ENCODE measurements at regions of chr13 and their contacts with region 1.

Region 1: DNA sequence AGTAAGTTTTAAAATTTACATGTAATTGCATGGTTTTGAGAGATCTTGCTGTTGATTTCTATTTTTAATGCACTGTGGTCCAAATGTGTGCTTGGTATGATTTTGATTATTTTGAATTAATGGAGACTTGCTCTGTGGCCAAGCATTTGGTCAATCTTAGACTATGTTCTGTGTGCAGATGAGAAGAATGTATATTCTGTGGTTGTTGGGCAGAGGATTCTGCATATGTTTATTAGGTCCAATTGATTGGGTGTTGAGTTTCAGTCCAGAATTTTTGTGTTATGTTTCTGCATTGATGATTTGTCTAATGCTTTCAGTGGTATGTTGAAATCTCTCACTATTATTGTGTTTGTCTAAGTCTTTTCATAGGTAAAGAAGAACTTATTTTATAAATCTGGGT is 82.3 kb downstream of the TDRD3 start:
- DNase-seq: no peak
- H3K4me3 ChIP-seq: no peak overlapping the region
- H3K27ac ChIP-seq: no peak overlapping the region
- H3K4me1 ChIP-seq: no peaks in the 10 kb centered on the region
- H3K27me3 ChIP-seq: no peaks in the 10 kb centered on the region
- CTCF ChIP-seq: no peak
- POLR2A ChIP-seq: no peak

Region 2: DNA sequence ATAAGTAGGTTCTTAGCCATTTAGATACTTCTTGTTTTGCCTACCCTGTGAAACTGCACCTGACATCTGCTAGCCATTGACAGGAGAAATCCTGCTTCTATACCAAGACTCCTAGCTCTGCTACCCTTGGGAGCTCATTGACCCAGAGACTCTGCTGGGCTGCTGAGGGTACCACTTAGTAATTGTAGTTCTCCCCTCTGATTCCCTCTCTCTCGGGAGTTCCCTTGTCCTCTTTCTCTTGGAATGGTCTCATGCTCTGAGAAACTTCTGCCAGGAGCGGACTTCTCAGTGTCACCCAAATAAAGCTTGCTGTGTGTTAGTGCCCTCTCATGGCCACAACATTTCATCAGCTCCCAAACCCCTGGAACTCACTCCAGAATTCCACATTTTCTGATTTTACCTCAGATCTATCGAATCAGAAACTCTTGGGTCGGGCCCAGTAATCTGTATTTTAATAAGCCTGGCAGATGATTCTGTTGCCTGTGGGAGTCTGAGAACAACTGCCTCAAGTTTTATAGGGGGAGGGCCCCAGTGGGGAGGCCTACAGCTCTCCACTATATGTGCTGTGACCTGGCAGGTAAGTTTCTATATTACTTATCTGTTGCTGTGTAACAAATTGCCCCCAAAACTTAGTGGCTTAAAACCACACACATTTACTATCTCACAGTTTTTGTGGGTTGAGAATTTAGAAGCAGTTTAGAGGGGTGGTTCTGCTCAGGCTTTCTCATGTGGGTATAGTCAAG is 138.9 kb after region 1 on chr13:
- intact Hi-C with region 1: loop called in 1 of 2 experiments (anchors 10 kb)
- DNase-seq: peak in 5 of 7 donors; percentile 21 to 25 (median 21)
- H3K4me3 ChIP-seq: no peak overlapping the region
- H3K27ac ChIP-seq: no peak overlapping the region
- H3K4me1 ChIP-seq: no peaks in the 10 kb centered on the region
- H3K27me3 ChIP-seq: no peaks in the 10 kb centered on the region
- CTCF ChIP-seq: peak in 5 of 6 experiments; percentile 18 to 35 (median 32)
- POLR2A ChIP-seq: no peak

Region 3: DNA sequence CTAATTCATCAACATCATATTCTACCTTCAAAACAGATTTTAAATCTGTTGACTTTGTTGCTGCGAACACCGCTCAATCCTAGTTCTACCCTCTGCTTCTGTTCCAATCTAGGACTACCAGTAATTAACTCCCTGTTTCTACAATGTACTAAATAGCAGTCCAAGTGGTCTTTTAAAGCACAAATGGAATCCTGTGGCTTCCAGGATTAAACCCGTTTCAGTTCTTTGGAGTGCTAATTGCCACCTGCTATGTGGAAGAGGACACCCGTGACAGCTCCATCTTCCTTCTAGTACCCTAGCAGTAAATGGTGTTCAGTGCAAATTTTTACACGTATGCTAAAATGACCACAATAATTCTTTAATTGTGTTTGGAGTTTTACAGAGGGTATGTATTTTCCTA is 149.9 kb after region 1 on chr13:
- intact Hi-C with region 1: no loop called
- DNase-seq: no peak
- H3K4me3 ChIP-seq: no peak overlapping the region
- H3K27ac ChIP-seq: no peak overlapping the region
- H3K4me1 ChIP-seq: no peaks in the 10 kb centered on the region
- H3K27me3 ChIP-seq: no peaks in the 10 kb centered on the region
- CTCF ChIP-seq: no peak
- POLR2A ChIP-seq: no peak

Measured in adrenal gland (tissue), 19 donors.